Ascending aorta (tissue), 2 donors: ENCODE measurements at regions of chrX and their contacts with region 1.

Region 1: DNA sequence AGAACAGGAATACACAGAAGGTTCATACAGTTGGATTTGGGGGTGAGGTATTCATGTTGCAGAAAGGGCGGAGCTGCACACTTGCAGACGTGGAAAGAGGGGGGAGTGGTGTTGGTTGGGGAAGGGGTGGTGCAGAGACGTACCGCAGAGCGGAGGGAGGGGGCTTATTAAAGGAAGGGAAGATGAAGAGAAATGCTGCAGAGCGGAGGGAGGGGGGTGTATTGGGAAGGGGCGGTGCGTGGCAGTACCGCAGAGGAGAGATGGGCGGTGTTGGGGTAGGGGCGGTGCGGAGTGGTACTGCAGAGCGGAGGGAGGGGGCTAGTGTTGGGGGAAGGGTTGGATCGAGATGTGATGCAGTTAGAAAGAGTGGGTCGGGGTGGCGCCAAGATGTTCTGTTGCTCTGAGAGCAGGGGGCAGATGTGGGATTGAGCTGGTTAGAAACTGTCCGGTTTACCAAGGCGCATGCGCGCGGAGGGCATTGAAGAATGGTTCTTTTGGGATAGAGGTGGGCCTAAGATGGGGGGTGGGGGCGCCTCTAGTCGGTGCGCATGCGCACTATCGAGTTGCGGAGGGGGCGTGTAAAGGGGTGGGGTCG is 900 bp downstream of the TRO start:
- DNase-seq: no peak
- H3K4me3 ChIP-seq: peak overlapping the region; percentile 48 to 58
- H3K27ac ChIP-seq: peak overlapping the region; percentile 31 to 42
- H3K4me1 ChIP-seq: no peaks in the 10 kb centered on the region
- H3K27me3 ChIP-seq: no peaks in the 10 kb centered on the region
- CTCF ChIP-seq: peak in 1 of 3 experiments; percentile 3

Region 2: DNA sequence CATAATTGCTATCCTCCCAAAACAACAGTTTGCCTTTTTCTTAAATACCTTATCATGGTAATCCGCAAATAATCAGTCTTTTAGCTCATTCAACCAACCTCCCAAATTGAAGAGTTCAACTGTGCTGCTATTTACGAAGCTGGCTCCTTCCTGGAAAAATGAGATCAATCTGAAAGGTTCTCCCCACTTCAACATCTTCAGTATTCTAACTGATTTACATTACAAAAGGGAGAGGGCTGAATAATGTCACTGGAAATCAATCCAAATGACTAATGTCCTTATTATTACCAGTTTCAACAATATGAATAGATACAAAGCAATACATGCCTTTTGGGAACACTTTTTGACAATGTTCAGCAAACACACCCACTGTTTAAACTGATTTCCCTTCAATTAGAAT is 649.9 kb before region 1 on chrX:
- intact Hi-C with region 1: loop called (anchors 10 kb)
- DNase-seq: no peak
- H3K4me3 ChIP-seq: no peak overlapping the region
- H3K27ac ChIP-seq: no peak overlapping the region
- H3K4me1 ChIP-seq: no peaks in the 10 kb centered on the region
- H3K27me3 ChIP-seq: no peaks in the 10 kb centered on the region
- CTCF ChIP-seq: no peak

Region 3: GRCh38 chrX:54447461-54447860 is 474.1 kb before region 1 on chrX:
- intact Hi-C with region 1: no loop called
- DNase-seq: no peak
- H3K4me3 ChIP-seq: no peak overlapping the region
- H3K27ac ChIP-seq: no peak overlapping the region
- H3K4me1 ChIP-seq: no peaks in the 10 kb centered on the region
- H3K27me3 ChIP-seq: no peaks in the 10 kb centered on the region
- CTCF ChIP-seq: no peak

Region 4: GRCh38 chrX:55119712-55120111 is 198.2 kb after region 1 on chrX:
- intact Hi-C with region 1: no loop called
- DNase-seq: no peak
- H3K4me3 ChIP-seq: no peak overlapping the region
- H3K27ac ChIP-seq: no peak overlapping the region
- H3K4me1 ChIP-seq: no peaks in the 10 kb centered on the region
- H3K27me3 ChIP-seq: no peaks in the 10 kb centered on the region
- CTCF ChIP-seq: no peak

Region 5: GRCh38 chrX:55220119-55220794 is 298.7 kb after region 1 on chrX and contains the start of gene PAGE5:
- intact Hi-C with region 1: no loop called
- DNase-seq: no peak
- H3K4me3 ChIP-seq: no peak within 1 kb of the TSS
- H3K27ac ChIP-seq: no peak within 1 kb of the TSS
- H3K4me1 ChIP-seq: no peaks in the 10 kb centered on the region
- H3K27me3 ChIP-seq: no peaks in the 10 kb centered on the region
- CTCF ChIP-seq: no peak
- total RNA-seq, gene PAGE5: not detected